Heart right ventricle (tissue), 16 donors: ENCODE measurements at regions of chr14 and their contacts with region 1.

Region 1: GRCh38 chr14:23320774-23321571 is at the start of gene PABPN1:
- DNase-seq: peak; percentile 97 to 99
- ATAC-seq: peak; percentile 94 to 98 (median 96)
- H3K4me3 ChIP-seq: peak within 1 kb of the TSS; percentile 80 to 96 (median 90)
- H3K27ac ChIP-seq: peak within 1 kb of the TSS; percentile 91 to 99 (median 96)
- H3K4me1 ChIP-seq: peaks cover 6 to 25% (median 21%) of the 10 kb centered on the region in 9 donors
- H3K27me3 ChIP-seq: no peaks in the 10 kb centered on the region
- CTCF ChIP-seq: no peak
- total RNA-seq, gene PABPN1: 57.0 to 96.1 (median 67.8) TPM

Region 2: DNA sequence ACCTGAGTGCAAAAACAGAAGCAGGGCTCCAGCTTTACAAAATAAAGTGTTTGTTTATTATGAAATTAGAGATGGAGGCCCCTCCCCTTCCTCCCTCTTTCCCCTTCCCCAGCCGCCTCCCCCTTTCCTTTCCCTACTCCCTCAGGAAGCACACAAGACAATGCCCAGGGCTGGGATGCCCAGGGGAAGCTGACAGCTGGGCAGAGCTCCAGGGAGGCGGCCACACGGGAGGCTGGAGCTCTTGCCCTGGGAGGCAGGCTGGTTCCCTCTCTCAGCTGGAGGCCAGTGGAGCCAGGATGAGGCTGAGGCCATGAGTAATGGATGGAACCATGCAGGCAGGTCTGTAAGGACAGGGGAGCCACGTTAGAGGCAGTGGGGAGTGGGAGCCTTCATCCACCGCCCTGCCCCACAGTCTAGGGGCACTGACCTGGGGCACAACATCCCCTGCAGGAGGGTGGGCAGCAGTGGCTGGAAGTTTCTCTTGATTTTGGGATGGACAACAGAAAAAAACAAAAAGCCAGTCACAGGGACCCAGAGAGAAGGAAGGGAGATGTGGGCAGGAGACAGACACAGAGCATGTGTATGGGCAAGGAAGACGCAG is 273.8 kb before region 1 on chr14:
- intact Hi-C with region 1: no loop called
- DNase-seq: peak; percentile 45 to 57
- ATAC-seq: peak; percentile 15 to 79 (median 56)
- H3K4me3 ChIP-seq: no peak overlapping the region
- H3K27ac ChIP-seq: peak overlapping the region in 9 of 10 donors; percentile 46 to 82 (median 64)
- H3K4me1 ChIP-seq: peaks cover 2 to 33% (median 19%) of the 10 kb centered on the region in 9 donors
- H3K27me3 ChIP-seq: no peaks in the 10 kb centered on the region
- CTCF ChIP-seq: no peak

Region 3: GRCh38 chr14:23301288-23301968 is 19.5 kb before region 1 on chr14:
- intact Hi-C with region 1: loop called in 4 of 10 experiments (anchors 1 to 2 kb)
- DNase-seq: peak; percentile 97 to 99
- ATAC-seq: peak; percentile 83 to 92 (median 88)
- H3K4me3 ChIP-seq: peak overlapping the region; percentile 66 to 94 (median 81)
- H3K27ac ChIP-seq: peak overlapping the region; percentile 94 to 100 (median 98)
- H3K4me1 ChIP-seq: peaks cover 7 to 52% (median 41%) of the 10 kb centered on the region in 9 donors
- H3K27me3 ChIP-seq: no peaks in the 10 kb centered on the region
- CTCF ChIP-seq: peak; percentile 51 to 94 (median 75)

Region 4: GRCh38 chr14:23306410-23307145 is 14.4 kb before region 1 on chr14 and contains the start of gene BCL2L2:
- intact Hi-C with region 1: loop called in 4 of 10 experiments (anchors 1 to 2 kb)
- DNase-seq: peak; percentile 92 to 94
- ATAC-seq: peak; percentile 59 to 84 (median 78)
- H3K4me3 ChIP-seq: peak within 1 kb of the TSS; percentile 39 to 85 (median 72)
- H3K27ac ChIP-seq: peak within 1 kb of the TSS; percentile 48 to 93 (median 91)
- H3K4me1 ChIP-seq: peaks cover 13 to 41% (median 37%) of the 10 kb centered on the region in 9 donors
- H3K27me3 ChIP-seq: no peaks in the 10 kb centered on the region
- CTCF ChIP-seq: no peak
- total RNA-seq, gene BCL2L2: 33.3 to 44.9 (median 38.2) TPM

Region 5: DNA sequence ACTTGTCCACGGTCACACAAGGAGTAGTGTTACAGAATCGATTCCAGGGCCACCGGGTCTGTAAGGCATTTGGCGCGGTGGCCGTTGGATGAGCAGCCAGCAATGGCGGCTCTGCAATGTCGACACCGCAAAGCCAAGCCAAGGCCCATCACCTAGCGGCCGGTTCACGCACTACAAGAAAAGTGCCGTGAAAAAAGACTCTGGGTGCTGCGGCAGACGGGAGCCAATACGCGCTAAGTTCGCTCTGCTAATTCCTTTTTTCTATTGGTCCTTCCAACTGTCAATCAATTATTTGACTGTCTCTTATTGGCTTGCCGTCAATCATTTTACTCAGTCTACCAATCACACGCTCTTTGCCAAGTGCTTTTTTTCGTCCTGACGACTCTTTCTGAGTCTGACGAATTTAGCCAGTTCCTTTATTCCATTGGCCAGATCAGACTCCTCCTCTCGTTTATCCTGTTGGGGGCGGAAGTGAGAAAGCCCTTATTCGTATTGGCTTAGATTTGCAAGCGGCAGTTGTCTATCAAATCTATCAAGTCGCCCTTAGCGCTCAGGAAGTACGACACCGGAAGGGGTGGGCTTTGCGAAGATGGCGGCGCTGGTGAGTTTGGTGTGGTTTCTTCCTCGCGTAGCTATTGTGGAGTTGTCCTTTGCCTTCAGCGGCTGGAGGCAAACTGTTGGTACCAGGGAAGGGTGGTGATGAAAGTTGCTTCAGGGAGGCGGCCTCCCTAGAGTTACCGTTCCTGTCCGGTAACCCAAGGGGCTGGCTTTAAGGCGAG is 148.3 kb after region 1 on chr14 and contains the start of gene NGDN:
- intact Hi-C with region 1: loop called in 7 of 10 experiments (anchors 1 to 10 kb)
- DNase-seq: peak; percentile 92 to 98
- ATAC-seq: peak; percentile 94 to 98 (median 97)
- H3K4me3 ChIP-seq: peak within 1 kb of the TSS; percentile 64 to 93 (median 82)
- H3K27ac ChIP-seq: peak within 1 kb of the TSS; percentile 63 to 92 (median 81)
- H3K4me1 ChIP-seq: peaks cover 0 to 15% (median 10%) of the 10 kb centered on the region in 9 donors
- H3K27me3 ChIP-seq: no peaks in the 10 kb centered on the region
- CTCF ChIP-seq: peak; percentile 77 to 92 (median 85)
- total RNA-seq, gene NGDN: 14.4 to 20.9 (median 17.2) TPM

Region 6: GRCh38 chr14:23555882-23556699 is 235.1 kb after region 1 on chr14 and contains the start of gene THTPA:
- intact Hi-C with region 1: loop called in 6 of 10 experiments (anchors 5 to 10 kb)
- DNase-seq: peak; percentile 92 to 93
- ATAC-seq: peak; percentile 93 to 96 (median 95)
- H3K4me3 ChIP-seq: peak within 1 kb of the TSS; percentile 58 to 93 (median 82)
- H3K27ac ChIP-seq: peak within 1 kb of the TSS; percentile 93 to 100 (median 97)
- H3K4me1 ChIP-seq: peaks cover 5 to 34% (median 26%) of the 10 kb centered on the region in 9 donors
- H3K27me3 ChIP-seq: no peaks in the 10 kb centered on the region
- CTCF ChIP-seq: no peak
- total RNA-seq, gene THTPA: 15.8 to 27.9 (median 18.0) TPM

Region 7: DNA sequence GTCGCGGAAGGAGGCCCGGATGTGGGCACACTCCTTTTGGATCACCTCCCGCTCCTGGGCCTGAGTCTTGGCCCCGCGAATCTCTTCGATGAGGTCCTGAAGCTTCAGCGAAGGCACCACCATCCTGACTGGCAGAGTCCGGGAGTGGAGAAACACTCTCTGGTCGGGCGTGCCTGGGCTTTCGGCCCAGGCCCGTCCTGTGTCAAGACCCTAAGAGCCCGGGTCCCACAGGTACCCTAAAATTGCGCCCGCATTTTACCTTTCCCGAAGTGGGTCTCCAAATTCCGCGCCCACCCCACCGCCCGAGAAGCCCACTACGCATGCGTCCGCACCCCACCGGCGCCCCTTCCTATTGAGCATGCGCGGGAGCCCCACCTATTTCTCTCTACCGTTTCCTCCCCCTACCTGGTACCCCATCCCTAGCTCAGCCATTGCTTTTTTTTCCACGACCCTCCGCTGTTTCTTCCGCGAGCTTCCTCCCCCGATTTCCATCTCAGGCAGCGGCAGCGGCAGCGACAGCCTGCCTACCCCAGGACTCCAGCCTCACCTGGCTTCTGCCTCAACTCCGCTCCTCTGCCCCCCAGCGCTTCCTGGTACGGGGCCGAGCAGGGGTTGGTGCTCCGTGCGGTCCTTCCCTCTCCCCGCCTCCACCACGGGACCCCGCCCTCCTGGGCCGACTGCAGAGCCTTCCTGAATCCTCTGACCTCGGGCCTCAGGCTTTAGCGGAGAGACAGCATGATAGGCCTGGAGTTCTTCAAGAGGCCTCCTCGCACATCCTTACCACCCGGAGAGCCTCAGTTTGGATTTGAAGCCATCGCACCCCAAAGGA is 246.4 kb after region 1 on chr14 and contains the start of gene AP1G2:
- intact Hi-C with region 1: loop called in 2 of 10 experiments (anchors 10 kb)
- DNase-seq: peak; percentile 84 to 85
- ATAC-seq: peak; percentile 59 to 89 (median 82)
- H3K4me3 ChIP-seq: peak within 1 kb of the TSS; percentile 59 to 78 (median 64)
- H3K27ac ChIP-seq: peak within 1 kb of the TSS in 8 of 10 donors; percentile 61 to 90 (median 71)
- H3K4me1 ChIP-seq: peaks cover 2 to 34% (median 16%) of the 10 kb centered on the region in 9 donors
- H3K27me3 ChIP-seq: peaks cover 0 to 12% (median 0%) of the 10 kb centered on the region in 7 donors
- CTCF ChIP-seq: no peak
- total RNA-seq, gene AP1G2: 6.6 to 19.9 (median 9.9) TPM